ENCODE measurements at regions of chr14 and their contacts with region 1.

Region 1: DNA sequence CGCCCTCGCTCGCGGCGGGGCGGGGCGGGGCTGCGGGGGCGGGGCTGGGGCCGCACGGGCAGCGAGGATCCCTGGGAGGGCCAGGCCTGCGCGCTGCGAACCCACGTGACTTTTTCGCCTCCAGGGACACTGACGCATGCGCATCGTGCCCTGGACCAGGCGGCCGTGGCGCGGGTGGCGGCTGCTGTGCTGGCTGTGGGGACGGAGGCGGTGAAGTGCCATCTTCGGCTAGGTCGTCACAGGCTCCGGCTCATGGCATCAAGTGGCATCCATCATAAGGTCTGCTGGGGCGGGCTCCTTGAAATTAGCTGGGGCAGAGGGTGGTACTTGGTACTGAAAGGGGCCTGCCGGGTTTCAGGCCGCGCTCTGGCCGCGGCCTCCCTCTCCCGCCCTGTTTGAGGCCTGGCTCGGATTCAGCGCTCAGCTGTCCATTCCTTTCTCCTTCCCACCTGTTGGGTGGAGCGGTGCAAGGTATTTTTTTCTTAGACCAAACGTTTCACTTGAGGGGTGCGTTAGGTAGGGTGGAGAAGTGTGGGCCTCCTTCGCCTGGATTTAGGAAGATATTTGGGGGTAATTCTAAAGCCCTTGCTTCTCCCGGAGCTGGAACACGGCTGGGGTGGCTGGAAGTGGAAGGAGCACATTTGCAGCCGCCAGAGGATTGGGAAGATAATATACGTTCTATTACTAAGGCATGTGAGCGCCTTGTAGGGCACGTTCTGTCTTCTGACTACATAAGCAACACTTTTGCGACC is at the start of gene PRPF39:
- DNase-seq: peak; percentile 89 to 97 (median 92)
- ATAC-seq: peak; percentile 97
- H3K4me3 ChIP-seq: peak within 1 kb of the TSS; percentile 86
- H3K4me3 Mint-ChIP-seq: peak within 1 kb of the TSS; percentile 94 to 97 (median 96)
- H3K27ac ChIP-seq: peak within 1 kb of the TSS; percentile 84
- H3K27ac Mint-ChIP-seq: peak within 1 kb of the TSS; percentile 89 to 98 (median 93)
- H3K4me1 ChIP-seq: peaks cover 21 to 40% of the 10 kb centered on the region in 2 donors
- H3K4me1 Mint-ChIP-seq: peaks cover 35 to 63% (median 50%) of the 10 kb centered on the region in 7 donors
- H3K27me3 ChIP-seq: no peaks in the 10 kb centered on the region
- H3K27me3 Mint-ChIP-seq: no peaks in the 10 kb centered on the region
- total RNA-seq, gene PRPF39: 46.2 to 81.8 (median 58.4) TPM

Region 2: DNA sequence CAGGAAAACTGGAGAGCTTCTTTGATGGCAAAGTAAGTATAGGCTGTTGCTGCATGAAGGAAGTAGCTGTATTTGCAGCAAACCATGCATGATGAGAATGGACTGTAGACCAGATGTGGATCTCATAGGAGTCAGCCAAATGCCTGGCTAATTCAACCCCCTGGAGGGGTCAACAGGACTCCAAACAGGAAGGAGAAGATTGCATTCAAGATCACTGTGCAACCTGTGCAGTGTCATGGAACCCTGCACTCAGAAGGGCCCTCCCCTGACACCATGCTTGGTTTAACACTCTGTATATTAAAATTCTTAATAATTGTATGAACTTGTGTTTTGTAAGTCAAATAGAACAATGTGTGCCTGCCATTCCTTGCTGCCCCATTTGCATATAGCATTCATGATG is 352.0 kb before region 1 on chr14:
- CTCF ChIA-PET with region 1: no interaction called
- POLR2A ChIA-PET with region 1: no interaction called
- intact Hi-C with region 1: no loop called
- DNase-seq: no peak
- ATAC-seq: no peak
- H3K4me3 ChIP-seq: no peak overlapping the region
- H3K4me3 Mint-ChIP-seq: no peak overlapping the region
- H3K27ac ChIP-seq: no peak overlapping the region
- H3K27ac Mint-ChIP-seq: no peak overlapping the region
- H3K4me1 ChIP-seq: no peaks in the 10 kb centered on the region
- H3K4me1 Mint-ChIP-seq: peaks cover 0 to 2% (median 0%) of the 10 kb centered on the region in 7 donors
- H3K27me3 ChIP-seq: no peaks in the 10 kb centered on the region
- H3K27me3 Mint-ChIP-seq: peaks cover 0 to 8% (median 5%) of the 10 kb centered on the region in 5 donors

Region 3: DNA sequence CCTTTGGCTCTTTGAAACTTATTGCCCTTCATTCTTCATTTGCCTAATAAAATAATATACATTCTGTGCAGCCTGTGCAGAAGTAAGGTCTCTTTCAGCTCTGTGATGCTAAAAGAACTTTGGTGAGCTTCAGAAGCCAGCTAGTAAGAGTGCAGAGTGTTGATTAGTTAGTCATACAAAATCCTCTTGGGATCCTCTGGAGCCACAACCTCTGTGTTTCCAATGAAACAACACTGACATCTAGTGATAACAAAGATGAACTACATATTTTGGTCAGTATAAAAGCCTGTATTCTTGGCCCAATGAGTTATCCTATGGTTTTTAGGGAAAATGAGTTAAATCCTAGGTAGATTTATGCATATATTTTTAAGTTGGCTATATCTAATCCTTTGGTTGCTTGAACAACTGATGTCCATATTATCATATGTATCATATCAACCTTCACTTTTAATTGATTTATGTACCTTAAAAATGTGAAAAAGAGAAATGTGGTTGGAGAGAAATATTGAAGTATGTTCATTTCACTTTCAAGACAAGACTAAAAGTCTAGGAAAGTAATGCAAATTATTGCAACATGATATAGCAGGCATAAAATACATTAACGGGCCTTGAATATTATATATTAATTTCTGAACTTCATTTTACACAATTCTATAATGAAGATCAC is 280.8 kb before region 1 on chr14:
- CTCF ChIA-PET with region 1: no interaction called
- POLR2A ChIA-PET with region 1: no interaction called
- intact Hi-C with region 1: no loop called
- DNase-seq: peak in 2 of 9 donors; percentile 0 to 1
- ATAC-seq: no peak
- H3K4me3 ChIP-seq: no peak overlapping the region
- H3K4me3 Mint-ChIP-seq: no peak overlapping the region
- H3K27ac ChIP-seq: no peak overlapping the region
- H3K27ac Mint-ChIP-seq: no peak overlapping the region
- H3K4me1 ChIP-seq: no peaks in the 10 kb centered on the region
- H3K4me1 Mint-ChIP-seq: peaks cover 0 to 2% (median 0%) of the 10 kb centered on the region in 7 donors
- H3K27me3 ChIP-seq: no peaks in the 10 kb centered on the region
- H3K27me3 Mint-ChIP-seq: peaks cover 0 to 23% (median 14%) of the 10 kb centered on the region in 5 donors

Region 4: DNA sequence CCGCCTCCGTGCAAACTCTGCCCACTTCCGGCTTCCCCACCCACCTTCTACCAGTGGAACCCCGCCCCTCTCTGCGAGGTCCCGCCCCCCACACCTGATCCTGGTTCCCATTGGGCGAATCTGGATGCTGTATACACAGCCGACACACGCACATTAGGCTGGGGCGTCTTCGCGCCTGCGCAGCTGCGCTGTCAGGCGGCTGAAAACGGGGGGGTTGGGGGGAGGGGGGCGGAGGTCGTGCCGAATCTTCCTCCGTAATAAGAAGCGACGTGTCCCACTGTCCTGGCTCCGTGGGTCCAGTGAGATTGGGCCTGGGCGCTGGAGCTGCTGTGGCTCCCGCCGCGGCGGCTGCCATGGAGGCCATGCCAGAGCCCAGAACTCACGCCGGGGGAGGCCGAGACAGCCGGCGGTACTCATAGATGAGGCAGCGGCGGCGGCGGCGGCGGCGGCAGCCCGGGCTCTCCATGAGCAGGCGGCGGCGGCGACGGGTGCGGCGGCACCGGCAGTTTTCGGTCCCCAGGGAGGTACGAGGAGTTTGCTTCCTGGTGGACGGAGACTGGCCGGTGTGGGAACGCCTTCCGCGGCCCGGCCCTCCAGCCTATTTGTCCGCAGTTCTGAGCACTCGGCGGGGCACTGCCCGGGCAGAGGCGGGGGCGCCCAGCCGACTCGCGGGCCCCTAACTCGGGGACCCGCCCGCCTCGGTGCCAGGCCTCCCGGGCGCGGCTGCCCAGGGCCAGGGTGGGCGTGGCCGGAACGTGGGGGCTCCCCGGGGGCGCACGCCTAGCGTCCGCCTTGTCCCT is 186.9 kb before region 1 on chr14:
- CTCF ChIA-PET with region 1: no interaction called
- POLR2A ChIA-PET with region 1: interaction called, 3 read pairs
- intact Hi-C with region 1: loop called (anchors 1 kb)
- DNase-seq: peak; percentile 80 to 98 (median 90)
- ATAC-seq: peak; percentile 99
- H3K4me3 ChIP-seq: peak overlapping the region; percentile 68
- H3K4me3 Mint-ChIP-seq: peak overlapping the region; percentile 80 to 97 (median 94)
- H3K27ac ChIP-seq: peak overlapping the region; percentile 86
- H3K27ac Mint-ChIP-seq: peak overlapping the region; percentile 83 to 98 (median 98)
- H3K4me1 ChIP-seq: peaks cover 13 to 17% of the 10 kb centered on the region in 2 donors
- H3K4me1 Mint-ChIP-seq: peaks cover 6 to 40% (median 27%) of the 10 kb centered on the region in 7 donors
- H3K27me3 ChIP-seq: no peaks in the 10 kb centered on the region
- H3K27me3 Mint-ChIP-seq: no peaks in the 10 kb centered on the region

Region 5: DNA sequence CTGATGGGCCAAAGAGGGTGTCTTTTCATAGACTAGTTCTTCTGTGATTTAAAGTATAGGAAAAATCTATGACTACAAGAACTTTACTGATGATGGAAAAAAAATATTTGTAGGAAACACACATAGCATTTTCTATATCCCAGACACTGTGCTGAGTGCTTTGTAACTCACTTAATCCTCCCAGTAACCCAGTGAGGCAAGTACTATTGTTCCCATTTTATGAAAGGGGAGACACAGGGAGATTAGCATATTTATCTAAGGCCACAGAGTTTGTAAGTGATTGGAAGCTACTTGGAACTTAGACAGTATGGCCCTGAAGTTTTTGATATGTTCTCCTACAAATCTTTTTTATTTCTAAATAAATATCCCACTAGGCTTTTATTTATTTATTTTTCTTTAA is 19.7 kb after region 1 on chr14:
- CTCF ChIA-PET with region 1: no interaction called
- POLR2A ChIA-PET with region 1: no interaction called
- intact Hi-C with region 1: loop called in 1 of 2 experiments (anchors 2 kb)
- DNase-seq: no peak
- ATAC-seq: no peak
- H3K4me3 ChIP-seq: no peak overlapping the region
- H3K4me3 Mint-ChIP-seq: no peak overlapping the region
- H3K27ac ChIP-seq: no peak overlapping the region
- H3K27ac Mint-ChIP-seq: peak overlapping the region in 2 of 9 donors; percentile 38 to 64
- H3K4me1 ChIP-seq: no peaks in the 10 kb centered on the region
- H3K4me1 Mint-ChIP-seq: peaks cover 0 to 23% (median 3%) of the 10 kb centered on the region in 7 donors
- H3K27me3 ChIP-seq: no peaks in the 10 kb centered on the region
- H3K27me3 Mint-ChIP-seq: no peaks in the 10 kb centered on the region

Region 6: DNA sequence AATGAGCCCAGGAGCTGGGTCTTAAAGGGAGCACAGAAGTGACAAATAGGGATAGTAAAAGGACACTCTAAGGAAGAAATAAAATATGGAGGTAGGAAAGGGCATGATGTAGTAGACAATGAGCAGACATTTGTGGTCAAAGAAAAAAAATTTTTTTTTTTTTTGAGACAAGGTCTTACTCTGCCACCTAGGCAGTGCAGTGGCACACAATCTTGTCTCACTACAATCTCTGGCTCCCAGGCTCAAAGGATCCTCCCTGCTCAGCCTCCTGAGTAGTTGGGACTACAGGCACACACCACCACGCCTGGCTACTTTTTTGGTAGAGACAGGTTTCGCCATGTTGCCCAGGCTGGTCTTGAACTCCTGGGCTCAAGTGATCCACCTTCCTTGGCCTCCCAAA is 41.6 kb after region 1 on chr14:
- CTCF ChIA-PET with region 1: no interaction called
- POLR2A ChIA-PET with region 1: no interaction called
- intact Hi-C with region 1: no loop called
- DNase-seq: no peak
- ATAC-seq: no peak
- H3K4me3 ChIP-seq: no peak overlapping the region
- H3K4me3 Mint-ChIP-seq: no peak overlapping the region
- H3K27ac ChIP-seq: no peak overlapping the region
- H3K27ac Mint-ChIP-seq: peak overlapping the region in 2 of 9 donors; percentile 60 to 78
- H3K4me1 ChIP-seq: no peaks in the 10 kb centered on the region
- H3K4me1 Mint-ChIP-seq: peaks cover 1 to 23% (median 11%) of the 10 kb centered on the region in 7 donors
- H3K27me3 ChIP-seq: no peaks in the 10 kb centered on the region
- H3K27me3 Mint-ChIP-seq: no peaks in the 10 kb centered on the region

Region 7: GRCh38 chr14:45253068-45253753 is 169.1 kb after region 1 on chr14 and contains the start of gene MIS18BP1:
- CTCF ChIA-PET with region 1: no interaction called
- POLR2A ChIA-PET with region 1: interaction called, 3 read pairs
- intact Hi-C with region 1: loop called (anchors 1 kb)
- DNase-seq: peak; percentile 83 to 95 (median 91)
- ATAC-seq: peak; percentile 94
- H3K4me3 ChIP-seq: peak within 1 kb of the TSS; percentile 78
- H3K4me3 Mint-ChIP-seq: peak within 1 kb of the TSS; percentile 89 to 97 (median 95)
- H3K27ac ChIP-seq: peak within 1 kb of the TSS; percentile 75
- H3K27ac Mint-ChIP-seq: peak within 1 kb of the TSS; percentile 92 to 97 (median 95)
- H3K4me1 ChIP-seq: peaks cover 0 to 13% of the 10 kb centered on the region in 2 donors
- H3K4me1 Mint-ChIP-seq: peaks cover 5 to 31% (median 20%) of the 10 kb centered on the region in 7 donors
- H3K27me3 ChIP-seq: no peaks in the 10 kb centered on the region
- H3K27me3 Mint-ChIP-seq: peaks cover 0 to 6% (median 0%) of the 10 kb centered on the region in 5 donors
- total RNA-seq, gene MIS18BP1: 15.6 to 64.9 (median 29.4) TPM

Measured in naive thymus-derived CD4-positive, alpha-beta T cell (primary cell).